Mammary epithelial cell (primary cell): ENCODE measurements at regions of chr14 and their contacts with region 1.

Region 1: GRCh38 chr14:22570132-22570949 is 18.7 kb downstream of the DAD1 start:
- DNase-seq: peak; percentile 66
- H3K4me3 ChIP-seq: no peak overlapping the region
- H3K27ac ChIP-seq: peak overlapping the region; percentile 46
- H3K4me1 ChIP-seq: peaks cover 10% of the 10 kb centered on the region
- H3K27me3 ChIP-seq: no peaks in the 10 kb centered on the region
- CTCF ChIP-seq: peak; percentile 52 to 67

Region 2: DNA sequence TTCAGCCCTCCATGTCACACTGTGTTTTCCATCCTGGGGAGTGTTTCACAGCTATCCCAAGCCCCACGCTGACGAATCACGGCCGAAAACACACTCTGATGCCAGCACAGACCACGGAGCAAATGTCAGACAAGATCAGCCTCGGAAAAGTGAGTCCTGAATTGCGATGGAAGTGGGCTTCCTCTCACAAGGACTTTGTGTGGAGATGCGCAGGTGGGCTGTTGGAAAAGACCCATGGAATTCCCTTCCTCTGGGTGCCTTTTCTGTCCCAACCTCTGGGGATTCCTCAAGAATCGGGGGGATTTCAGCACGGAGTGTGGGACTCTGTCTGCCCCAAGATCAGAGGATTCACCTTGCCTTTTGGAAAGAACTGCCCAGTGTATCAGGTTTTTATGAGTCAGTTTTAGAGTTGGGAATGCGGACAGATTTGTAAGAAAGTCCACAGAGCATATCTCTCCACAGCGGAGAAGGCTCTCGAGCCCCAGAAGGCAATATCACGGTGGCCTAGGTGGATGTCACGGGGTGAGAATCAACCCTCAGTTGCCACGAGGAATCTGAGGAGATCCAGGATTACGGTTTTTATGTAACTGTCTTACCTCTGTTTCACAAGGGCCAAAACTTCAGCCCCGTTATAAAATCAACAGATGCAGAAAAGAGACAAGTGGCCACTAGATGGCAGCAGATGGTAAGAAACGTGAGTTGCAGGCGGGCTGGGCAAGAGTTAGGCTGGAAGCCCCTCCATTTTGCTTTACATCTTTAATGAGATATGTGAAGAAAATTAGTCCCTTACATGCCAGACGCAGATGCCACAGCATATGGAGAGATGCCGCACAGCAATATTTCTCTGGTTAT is 183.2 kb before region 1 on chr14:
- CTCF ChIA-PET with region 1: interaction called, 3 read pairs
- dilution Hi-C with region 1: no loop called
- in situ Hi-C with region 1: loop called in 1 of 2 experiments (anchors 25 kb)
- intact Hi-C with region 1: no loop called
- DNase-seq: peak; percentile 39
- H3K4me3 ChIP-seq: no peak overlapping the region
- H3K27ac ChIP-seq: no peak overlapping the region
- H3K4me1 ChIP-seq: peaks cover 16% of the 10 kb centered on the region
- H3K27me3 ChIP-seq: peaks cover 4% of the 10 kb centered on the region
- CTCF ChIP-seq: peak; percentile 48 to 77

Region 3: DNA sequence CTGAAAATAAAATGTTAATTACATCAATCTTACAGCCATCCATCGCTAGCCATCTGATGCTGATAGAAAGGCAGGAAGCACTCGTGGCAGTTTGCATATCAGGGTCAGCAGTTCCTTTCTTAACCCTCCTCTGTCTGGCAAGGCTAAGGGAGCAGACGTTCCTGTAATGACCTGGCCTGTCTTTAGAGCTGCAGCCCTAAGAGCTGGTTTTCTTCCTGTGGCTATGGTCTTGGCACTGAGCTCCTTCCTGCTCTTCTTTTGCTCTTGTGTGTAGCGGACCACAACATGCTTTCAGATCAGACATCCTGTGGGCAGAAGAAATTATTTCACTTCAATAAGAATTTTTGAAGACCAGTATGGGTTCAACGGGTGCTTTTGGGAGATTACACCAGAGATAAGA is 151.7 kb before region 1 on chr14:
- CTCF ChIA-PET with region 1: no interaction called
- dilution Hi-C with region 1: no loop called
- in situ Hi-C with region 1: no loop called
- intact Hi-C with region 1: no loop called
- DNase-seq: no peak
- H3K4me3 ChIP-seq: no peak overlapping the region
- H3K27ac ChIP-seq: no peak overlapping the region
- H3K4me1 ChIP-seq: no peaks in the 10 kb centered on the region
- H3K27me3 ChIP-seq: no peaks in the 10 kb centered on the region
- CTCF ChIP-seq: no peak

Region 4: GRCh38 chr14:22598099-22598899 is 28.0 kb after region 1 on chr14 and contains the start of gene ABHD4:
- CTCF ChIA-PET with region 1: no interaction called
- dilution Hi-C with region 1: no loop called
- in situ Hi-C with region 1: no loop called
- intact Hi-C with region 1: loop called (anchors 1 kb)
- DNase-seq: peak; percentile 65
- H3K4me3 ChIP-seq: peak within 1 kb of the TSS; percentile 77 to 91 (median 90)
- H3K27ac ChIP-seq: peak within 1 kb of the TSS; percentile 85
- H3K4me1 ChIP-seq: peaks cover 28% of the 10 kb centered on the region
- H3K27me3 ChIP-seq: no peaks in the 10 kb centered on the region
- CTCF ChIP-seq: no peak
- total RNA-seq, gene ABHD4: 16.7 to 20.5 TPM

Region 5: GRCh38 chr14:22641846-22642245 is 71.5 kb after region 1 on chr14:
- CTCF ChIA-PET with region 1: no interaction called
- dilution Hi-C with region 1: no loop called
- in situ Hi-C with region 1: no loop called
- intact Hi-C with region 1: loop called (anchors 1 kb)
- DNase-seq: peak; percentile 32
- H3K4me3 ChIP-seq: no peak overlapping the region
- H3K27ac ChIP-seq: no peak overlapping the region
- H3K4me1 ChIP-seq: peaks cover 10% of the 10 kb centered on the region
- H3K27me3 ChIP-seq: no peaks in the 10 kb centered on the region
- CTCF ChIP-seq: no peak

Region 6: DNA sequence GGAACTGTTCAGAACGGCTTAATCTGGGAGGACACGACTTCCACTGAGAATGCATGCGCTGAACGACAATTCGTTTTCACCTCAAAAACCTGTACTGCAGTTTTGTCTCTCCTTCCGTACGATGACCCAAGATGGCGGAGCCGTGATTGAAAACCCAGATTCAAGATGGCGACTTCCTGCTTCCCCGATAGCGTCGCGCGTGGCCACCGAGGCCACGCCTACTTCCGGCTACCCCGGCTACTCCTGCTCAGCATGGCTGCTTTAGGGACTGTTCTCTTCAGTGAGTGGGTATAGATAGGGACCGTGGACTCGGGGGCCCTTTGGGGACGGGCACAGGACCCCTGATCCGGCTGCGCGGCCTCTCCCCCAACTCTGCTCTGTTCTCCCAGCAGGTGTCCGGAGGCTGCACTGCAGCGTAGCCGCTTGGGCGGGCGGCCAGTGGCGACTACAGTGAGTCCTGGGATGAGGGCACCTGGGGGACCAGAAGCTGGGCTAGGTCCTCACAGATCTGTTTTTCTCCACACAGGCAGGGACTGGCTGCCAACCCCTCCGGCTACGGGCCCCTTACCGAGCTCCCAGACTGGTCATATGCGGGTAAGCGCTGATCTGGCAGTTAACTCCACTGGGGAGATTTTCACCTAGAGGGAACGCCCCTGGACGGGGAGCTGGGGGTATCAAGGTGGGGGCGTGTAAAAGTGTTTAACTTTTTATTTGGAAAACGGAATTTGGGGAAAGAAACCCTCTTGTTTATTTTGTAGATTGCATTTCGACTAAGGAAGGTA is 259.5 kb after region 1 on chr14 and contains the start of gene MRPL52:
- CTCF ChIA-PET with region 1: no interaction called
- dilution Hi-C with region 1: no loop called
- in situ Hi-C with region 1: loop called in 1 of 2 experiments (anchors 25 kb)
- intact Hi-C with region 1: loop called (anchors 5 kb)
- DNase-seq: peak; percentile 79
- H3K4me3 ChIP-seq: peak within 1 kb of the TSS; percentile 62 to 97 (median 83)
- H3K27ac ChIP-seq: peak within 1 kb of the TSS; percentile 72
- H3K4me1 ChIP-seq: peaks cover 3% of the 10 kb centered on the region
- H3K27me3 ChIP-seq: no peaks in the 10 kb centered on the region
- CTCF ChIP-seq: peak in 1 of 2 donors; percentile 13
- total RNA-seq, gene MRPL52: 20.3 to 126 TPM

Region 7: GRCh38 chr14:22836301-22837113 is 266.2 kb after region 1 on chr14 and contains the start of gene MMP14:
- CTCF ChIA-PET with region 1: no interaction called
- dilution Hi-C with region 1: no loop called
- in situ Hi-C with region 1: loop called in 1 of 2 experiments (anchors 25 kb)
- intact Hi-C with region 1: loop called (anchors 5 kb)
- DNase-seq: peak; percentile 86
- H3K4me3 ChIP-seq: peak within 1 kb of the TSS; percentile 84 to 94 (median 86)
- H3K27ac ChIP-seq: peak within 1 kb of the TSS; percentile 86
- H3K4me1 ChIP-seq: peaks cover 24% of the 10 kb centered on the region
- H3K27me3 ChIP-seq: no peaks in the 10 kb centered on the region
- CTCF ChIP-seq: peak in 1 of 2 donors; percentile 57
- total RNA-seq, gene MMP14: 525 to 766 TPM

Region 8: DNA sequence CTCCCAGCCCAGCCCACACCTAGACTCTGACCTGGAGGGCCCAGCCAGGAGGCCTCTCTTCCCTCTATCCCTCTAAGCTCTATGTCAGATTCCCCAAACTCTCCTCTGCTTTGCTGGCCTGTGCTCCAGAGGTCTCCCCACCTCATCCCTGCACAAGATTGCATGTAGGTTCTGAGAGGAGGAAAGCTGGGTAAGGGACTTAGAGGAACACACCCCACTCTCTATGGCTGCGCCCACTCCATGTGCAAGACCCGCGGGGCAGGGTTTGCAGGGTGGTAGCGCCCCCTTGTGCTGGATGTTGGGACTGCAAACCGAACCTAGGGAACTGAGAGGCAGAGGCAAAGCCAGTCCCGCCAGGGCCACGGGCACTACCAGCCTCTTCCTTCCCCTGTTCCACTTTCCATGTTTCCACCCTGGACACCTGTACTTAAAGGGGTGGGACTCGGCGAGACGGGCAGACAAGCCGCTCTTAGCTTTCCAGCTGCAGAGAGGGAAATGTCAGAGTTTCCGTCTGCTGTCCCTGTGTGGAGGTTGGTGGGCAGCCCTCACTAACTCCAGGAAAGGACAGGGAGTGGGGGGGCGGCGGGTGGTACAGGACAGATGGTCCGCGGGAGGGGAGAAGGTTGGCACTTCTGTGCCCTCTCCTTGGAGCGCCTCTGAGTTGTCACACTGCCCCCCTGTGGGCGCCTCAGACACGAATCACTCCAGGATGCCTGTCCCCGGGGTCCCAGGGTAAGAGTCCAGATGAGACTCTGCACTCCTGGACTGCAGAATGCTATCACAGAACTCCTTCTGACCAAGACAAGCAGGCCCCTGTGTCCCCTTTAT is 282.8 kb after region 1 on chr14:
- CTCF ChIA-PET with region 1: interaction called, 3 read pairs
- dilution Hi-C with region 1: no loop called
- in situ Hi-C with region 1: loop called (anchors 25 kb)
- intact Hi-C with region 1: loop called (anchors 2 kb)
- DNase-seq: peak; percentile 80
- H3K4me3 ChIP-seq: peak overlapping the region in 2 of 3 experiments; percentile 7 to 52
- H3K27ac ChIP-seq: peak overlapping the region; percentile 90
- H3K4me1 ChIP-seq: peaks cover 54% of the 10 kb centered on the region
- H3K27me3 ChIP-seq: no peaks in the 10 kb centered on the region
- CTCF ChIP-seq: peak; percentile 91 to 93